CD4-positive, alpha-beta memory T cell (primary cell): ENCODE measurements at regions of chr18 and their contacts with region 1.

Region 1: DNA sequence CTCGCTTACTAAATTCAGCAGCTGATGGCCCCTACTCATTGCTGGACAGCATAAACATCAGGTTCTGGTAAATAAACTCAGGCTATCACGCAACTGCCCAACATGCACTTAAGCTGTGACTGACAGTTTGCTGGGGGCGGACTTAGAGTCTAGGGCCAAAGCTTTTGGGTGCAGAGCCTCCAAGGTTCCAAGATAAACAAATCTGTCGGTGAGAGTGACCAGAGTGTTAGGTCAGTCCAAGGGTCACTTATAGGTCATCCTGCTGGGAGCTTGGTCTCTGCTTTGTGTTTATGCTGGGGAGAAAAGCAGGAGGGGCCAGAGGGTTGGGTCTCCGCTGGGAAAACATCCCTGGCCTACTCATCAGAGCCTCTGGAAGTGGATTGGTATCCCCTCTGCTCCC is 188.6 kb upstream of the GATA6 start:
- DNase-seq: no peak
- H3K4me3 ChIP-seq: no peak overlapping the region
- H3K4me3 Mint-ChIP-seq: no peak overlapping the region
- H3K27ac ChIP-seq: no peak overlapping the region
- H3K27ac Mint-ChIP-seq: no peak overlapping the region
- H3K4me1 ChIP-seq: no peaks in the 10 kb centered on the region
- H3K4me1 Mint-ChIP-seq: no peaks in the 10 kb centered on the region
- H3K27me3 ChIP-seq: no peaks in the 10 kb centered on the region
- H3K27me3 Mint-ChIP-seq: peaks cover 2 to 11% of the 10 kb centered on the region in 2 donors

Region 2: DNA sequence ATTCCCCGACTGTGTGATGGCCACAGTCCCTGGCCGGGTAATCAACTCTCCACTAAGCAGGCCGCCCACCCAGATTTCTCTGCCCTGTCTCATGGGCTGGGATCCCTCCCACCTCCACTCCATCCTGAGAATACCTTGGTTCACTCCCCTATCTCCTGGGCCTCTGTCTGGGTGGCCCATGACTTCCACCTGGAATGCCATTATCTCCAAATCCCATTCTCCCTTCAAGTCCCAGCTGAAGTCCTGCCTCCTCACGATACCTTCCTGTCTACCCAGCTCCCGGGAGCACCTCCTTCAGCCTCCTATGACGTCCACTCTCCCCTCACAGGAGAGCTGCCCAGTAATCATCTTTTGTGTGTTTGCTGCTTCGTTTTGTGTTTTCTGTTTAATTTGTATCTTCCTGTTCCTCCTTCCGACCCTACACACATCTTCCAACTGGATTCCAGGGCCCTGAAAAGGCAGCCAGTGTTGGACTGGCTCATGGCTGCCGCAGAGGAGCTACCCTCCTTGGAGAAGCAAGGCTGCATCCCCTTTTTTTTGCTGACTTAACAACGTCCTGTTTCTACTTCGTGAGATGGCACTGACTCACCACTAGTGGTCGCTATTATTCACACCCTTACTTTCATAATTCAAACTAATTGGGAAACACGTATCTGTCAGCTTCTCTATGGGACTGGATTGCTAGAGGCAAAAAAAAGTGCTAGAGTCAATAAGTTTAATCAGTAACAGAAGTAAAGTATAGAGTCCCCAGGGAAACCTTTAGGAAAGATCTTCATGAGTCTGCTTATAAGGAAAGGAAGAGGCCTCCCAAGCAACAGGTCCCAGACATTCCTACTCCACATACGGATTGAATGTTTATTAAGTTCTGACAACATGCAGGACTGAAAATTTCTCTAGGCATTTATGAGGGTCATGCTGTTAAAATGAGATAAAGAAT is 16.7 kb after region 1 on chr18:
- CTCF ChIA-PET with region 1: interaction called, 12 read pairs
- POLR2A ChIA-PET with region 1: interaction called, 3 read pairs
- intact Hi-C with region 1: no loop called
- DNase-seq: peak in 4 of 5 donors; percentile 11 to 26 (median 16)
- H3K4me3 ChIP-seq: no peak overlapping the region
- H3K4me3 Mint-ChIP-seq: no peak overlapping the region
- H3K27ac ChIP-seq: no peak overlapping the region
- H3K27ac Mint-ChIP-seq: no peak overlapping the region
- H3K4me1 ChIP-seq: no peaks in the 10 kb centered on the region
- H3K4me1 Mint-ChIP-seq: peaks cover 4 to 10% (median 4%) of the 10 kb centered on the region in 4 donors
- H3K27me3 ChIP-seq: no peaks in the 10 kb centered on the region
- H3K27me3 Mint-ChIP-seq: peaks cover 2 to 3% of the 10 kb centered on the region in 2 donors